ENCODE measurements at regions of chr7 and their contacts with region 1.

Region 1: GRCh38 chr7:107147464-107148393 is 21.1 kb upstream of the HBP1 start:
- DNase-seq: no peak
- H3K4me3 ChIP-seq: no peak overlapping the region
- H3K27ac ChIP-seq: no peak overlapping the region
- H3K4me1 ChIP-seq: no peaks in the 10 kb centered on the region
- H3K27me3 ChIP-seq: no peaks in the 10 kb centered on the region
- CTCF ChIP-seq: peak; percentile 54

Region 2: DNA sequence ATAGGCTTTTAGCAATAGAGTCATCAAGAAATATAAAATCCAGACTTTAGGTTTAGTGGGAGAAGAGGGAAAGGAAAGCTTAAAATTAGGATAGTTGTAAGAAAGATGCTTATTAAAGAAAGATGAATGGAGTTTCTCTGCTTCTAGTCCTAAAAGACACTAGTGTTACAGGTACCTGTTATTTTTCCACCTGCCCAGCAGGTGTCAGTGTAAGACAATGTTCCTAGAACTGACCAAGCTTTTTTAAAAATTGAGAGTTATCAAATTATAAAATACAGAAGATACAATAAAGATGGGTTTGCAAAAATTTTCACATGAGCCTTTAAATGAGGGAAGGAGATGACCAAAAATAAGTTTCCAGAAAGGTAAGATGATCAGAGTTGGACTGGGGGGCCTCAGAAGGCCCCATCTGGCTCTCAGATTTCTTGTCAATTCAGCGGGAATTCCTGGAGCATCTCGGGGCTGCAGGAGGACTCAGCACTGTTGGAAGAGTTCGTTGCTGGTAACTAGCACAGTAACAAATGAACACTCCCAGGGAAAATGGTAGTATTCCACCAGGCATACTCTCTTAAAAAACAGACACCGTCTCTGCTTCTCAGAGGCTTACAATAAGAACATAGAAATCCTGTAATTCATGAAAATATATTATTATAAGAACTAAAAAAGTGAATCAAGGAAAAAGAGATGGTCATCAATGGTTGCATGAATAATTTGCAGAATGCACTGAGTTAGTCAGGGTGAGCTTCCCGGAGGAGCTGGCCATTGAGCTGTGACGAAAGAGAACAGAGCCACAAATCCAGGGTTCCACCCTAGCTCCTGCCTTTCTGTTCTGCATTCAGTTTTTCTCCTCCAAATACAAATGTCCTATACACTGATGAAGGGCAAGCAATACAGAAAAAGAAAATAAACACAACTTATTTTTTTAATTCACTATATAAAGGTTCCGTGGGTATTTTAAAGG is 354.4 kb before region 1 on chr7:
- intact Hi-C with region 1: loop called (anchors 2 kb)
- DNase-seq: no peak
- H3K4me3 ChIP-seq: no peak overlapping the region
- H3K27ac ChIP-seq: no peak overlapping the region
- H3K4me1 ChIP-seq: no peaks in the 10 kb centered on the region
- H3K27me3 ChIP-seq: no peaks in the 10 kb centered on the region
- CTCF ChIP-seq: peak; percentile 64

Region 3: GRCh38 chr7:106848851-106849442 is 298.8 kb before region 1 on chr7:
- intact Hi-C with region 1: no loop called
- DNase-seq: no peak
- H3K4me3 ChIP-seq: no peak overlapping the region
- H3K27ac ChIP-seq: no peak overlapping the region
- H3K4me1 ChIP-seq: no peaks in the 10 kb centered on the region
- H3K27me3 ChIP-seq: no peaks in the 10 kb centered on the region
- CTCF ChIP-seq: no peak

Region 4: GRCh38 chr7:106947244-106947728 is 200.4 kb before region 1 on chr7:
- intact Hi-C with region 1: loop called (anchors 2 kb)
- DNase-seq: peak; percentile 49
- H3K4me3 ChIP-seq: no peak overlapping the region
- H3K27ac ChIP-seq: no peak overlapping the region
- H3K4me1 ChIP-seq: no peaks in the 10 kb centered on the region
- H3K27me3 ChIP-seq: no peaks in the 10 kb centered on the region
- CTCF ChIP-seq: peak; percentile 52

Region 5: DNA sequence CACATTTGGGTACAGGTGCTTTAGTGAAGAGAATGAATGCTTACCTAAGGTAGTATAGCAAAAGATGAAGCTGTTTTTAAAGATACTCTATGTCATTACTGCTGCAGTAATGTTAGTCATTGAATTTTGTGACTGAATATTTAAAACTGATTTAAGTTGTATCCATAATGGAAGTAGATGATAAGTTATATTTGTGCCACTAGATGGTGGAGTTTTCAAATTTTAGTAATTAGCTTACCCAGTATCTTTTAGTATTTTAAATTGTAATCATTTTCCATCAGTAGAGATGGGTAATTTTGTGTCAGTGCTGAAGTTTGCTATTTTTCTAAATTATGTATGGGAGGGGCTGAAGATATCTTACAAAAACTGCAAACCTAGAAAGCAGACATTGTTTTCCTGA is 46.3 kb after region 1 on chr7:
- intact Hi-C with region 1: no loop called
- DNase-seq: no peak
- H3K4me3 ChIP-seq: no peak overlapping the region
- H3K27ac ChIP-seq: no peak overlapping the region
- H3K4me1 ChIP-seq: no peaks in the 10 kb centered on the region
- H3K27me3 ChIP-seq: no peaks in the 10 kb centered on the region
- CTCF ChIP-seq: no peak

Measured in colonic mucosa (tissue), 4 donors.